ENCODE measurements at regions of chr17 and their contacts with region 1.

Region 1: DNA sequence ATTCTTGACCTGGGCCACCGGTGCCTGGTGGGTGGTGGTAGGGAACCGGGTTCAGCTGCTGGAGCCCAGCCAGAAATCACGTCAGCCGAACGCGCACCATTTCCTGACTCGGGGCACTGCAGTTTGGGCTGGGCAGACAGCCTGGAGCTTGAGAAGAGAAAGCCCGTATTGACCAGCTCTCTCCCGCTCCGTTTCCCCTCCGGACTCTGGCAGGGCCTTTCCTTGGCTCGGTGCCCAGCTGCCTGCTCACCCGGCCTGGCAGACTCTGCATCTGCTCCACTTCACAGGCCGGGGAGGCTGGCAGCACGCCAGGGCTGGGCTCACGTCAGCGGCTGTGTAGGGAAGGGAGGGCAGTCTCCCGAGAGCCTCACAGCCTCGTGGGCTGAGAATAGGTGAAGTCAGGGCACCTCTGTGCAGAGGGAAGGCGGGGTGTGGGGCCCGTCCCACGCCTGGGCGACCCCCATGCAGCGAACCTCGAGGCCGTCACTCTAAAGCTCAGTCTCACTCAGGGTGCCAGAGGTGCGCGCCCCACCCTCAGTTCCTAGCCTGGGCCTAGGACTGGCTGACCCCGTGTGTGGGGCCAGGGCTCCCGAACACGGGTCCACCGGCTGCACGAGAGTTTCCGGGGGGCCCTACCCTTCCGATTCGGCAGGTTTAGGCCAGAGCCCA is 59.1 kb downstream of the OR1D5 start:
- DNase-seq: peak; percentile 99
- H3K4me3 ChIP-seq: peak overlapping the region; percentile 7 to 49
- H3K27ac ChIP-seq: peak overlapping the region; percentile 88 to 95
- H3K4me1 ChIP-seq: peaks cover 10 to 11% of the 10 kb centered on the region in 2 donors
- H3K27me3 ChIP-seq: no peaks in the 10 kb centered on the region
- CTCF ChIP-seq: no peak

Region 2: GRCh38 chr17:2711601-2712299 is 292.5 kb before region 1 on chr17 and contains the start of gene CLUH:
- intact Hi-C with region 1: loop called (anchors 5 kb)
- DNase-seq: peak; percentile 92 to 98
- H3K4me3 ChIP-seq: peak within 1 kb of the TSS; percentile 77 to 95
- H3K27ac ChIP-seq: peak within 1 kb of the TSS; percentile 56 to 71
- H3K4me1 ChIP-seq: peaks cover 24 to 44% of the 10 kb centered on the region in 2 donors
- H3K27me3 ChIP-seq: no peaks in the 10 kb centered on the region
- CTCF ChIP-seq: no peak
- total RNA-seq, gene CLUH: 58.1 TPM

Region 3: DNA sequence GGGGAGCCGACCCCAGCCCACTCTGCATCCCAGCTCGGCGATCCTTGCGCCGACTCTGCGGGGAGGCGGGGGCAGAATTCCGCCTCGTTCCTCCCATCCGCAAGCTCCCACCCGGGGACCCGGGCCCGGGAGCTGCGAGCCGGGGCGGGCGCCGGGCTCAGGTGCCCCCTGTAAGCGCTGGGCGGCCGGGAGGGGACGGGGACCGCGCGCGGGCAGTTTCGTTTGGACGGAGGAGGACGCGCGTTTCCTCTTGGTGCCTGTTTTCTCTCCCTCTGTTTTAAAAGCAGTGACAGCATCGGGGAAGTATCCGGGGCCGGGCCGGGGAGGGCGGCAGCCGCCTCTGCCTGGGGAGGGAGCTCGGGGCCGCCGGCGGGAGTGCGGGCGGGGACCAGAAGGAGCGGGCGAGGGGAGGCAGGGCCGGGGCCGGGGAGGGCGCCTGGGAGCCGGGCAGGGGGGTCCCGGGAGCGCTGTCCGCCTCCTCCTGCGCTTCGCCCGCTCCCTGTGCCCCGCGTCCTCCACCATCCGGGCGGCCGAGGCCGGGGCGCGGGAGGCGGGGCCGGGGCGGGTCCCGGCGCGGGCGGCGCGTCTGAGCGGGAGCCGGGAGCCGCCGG is 151.1 kb before region 1 on chr17:
- intact Hi-C with region 1: loop called (anchors 2 kb)
- DNase-seq: peak in 1 of 2 donors; percentile 81
- H3K4me3 ChIP-seq: peak overlapping the region; percentile 56 to 85
- H3K27ac ChIP-seq: peak overlapping the region; percentile 79 to 82
- H3K4me1 ChIP-seq: peaks cover 10 to 13% of the 10 kb centered on the region in 2 donors
- H3K27me3 ChIP-seq: no peaks in the 10 kb centered on the region
- CTCF ChIP-seq: no peak

Region 4: GRCh38 chr17:2982854-2983253 is 21.4 kb before region 1 on chr17:
- intact Hi-C with region 1: loop called (anchors 1 kb)
- DNase-seq: peak in 1 of 2 donors; percentile 83
- H3K4me3 ChIP-seq: peak overlapping the region in 1 of 2 donors; percentile 36
- H3K27ac ChIP-seq: peak overlapping the region; percentile 6 to 19
- H3K4me1 ChIP-seq: no peaks in the 10 kb centered on the region
- H3K27me3 ChIP-seq: no peaks in the 10 kb centered on the region
- CTCF ChIP-seq: peak; percentile 6 to 62 (median 45)

Measured in ascending aorta (tissue), 2 donors.